ENCODE measurements at regions of chr20 and their contacts with region 1.

Region 1: DNA sequence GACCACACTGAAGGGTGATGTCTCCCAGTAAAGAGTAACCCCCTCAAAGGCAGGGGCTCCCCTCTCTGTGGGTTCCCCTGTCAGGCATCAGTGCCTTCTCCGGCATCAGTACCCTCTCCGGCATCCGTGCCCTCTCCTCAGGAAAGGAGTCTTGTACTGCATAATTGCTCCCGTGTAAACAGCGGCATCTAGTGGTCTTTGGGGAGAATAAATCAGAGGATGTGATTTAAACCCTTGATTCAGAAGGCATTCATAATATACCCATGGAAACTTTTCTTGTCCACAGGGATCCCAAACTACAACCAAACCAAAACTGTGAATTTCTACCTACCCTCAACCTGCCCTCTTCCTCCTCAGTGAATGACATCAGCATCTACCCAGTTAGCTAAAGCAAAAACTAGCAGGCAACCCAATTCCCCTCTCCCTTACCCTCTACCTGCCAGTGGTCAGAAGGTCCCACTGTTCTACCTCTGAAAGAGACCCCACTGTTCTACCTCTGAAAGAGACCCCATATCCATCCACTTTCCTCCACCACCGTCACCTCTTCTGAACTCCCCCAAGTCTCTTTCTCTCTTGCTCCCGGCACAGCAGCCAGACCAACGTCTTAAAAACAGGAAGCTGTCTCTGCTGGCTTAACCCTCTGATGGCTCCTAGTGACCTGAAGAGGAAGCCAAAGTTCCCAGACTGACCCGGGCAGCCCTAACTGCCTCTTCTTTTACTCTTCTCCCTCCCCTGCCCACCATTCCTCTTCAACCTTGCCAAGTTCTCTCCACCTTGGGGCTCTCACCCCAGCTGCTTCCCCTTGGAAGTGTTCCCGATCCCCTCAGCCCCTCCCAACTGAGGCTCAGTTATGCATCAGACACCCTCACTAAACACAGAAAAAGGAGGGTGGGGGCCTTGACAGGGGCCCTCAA is 27.2 kb downstream of the UBE2V1 start:
- DNase-seq: peak; percentile 27
- H3K4me3 ChIP-seq: no peak overlapping the region
- H3K27ac ChIP-seq: peak overlapping the region; percentile 3
- H3K27me3 ChIP-seq: no peaks in the 10 kb centered on the region
- CTCF ChIP-seq: peak; percentile 84

Region 2: GRCh38 chr20:49989234-49990065 is 96.3 kb before region 1 on chr20:
- CTCF ChIA-PET with region 1: interaction called, 10 read pairs
- POLR2A ChIA-PET with region 1: interaction called, 4 read pairs
- DNase-seq: peak; percentile 59
- H3K4me3 ChIP-seq: no peak overlapping the region
- H3K27ac ChIP-seq: peak overlapping the region; percentile 95
- H3K27me3 ChIP-seq: no peaks in the 10 kb centered on the region
- CTCF ChIP-seq: no peak

Region 3: GRCh38 chr20:50027611-50028105 is 58.1 kb before region 1 on chr20:
- CTCF ChIA-PET with region 1: interaction called, 11 read pairs
- POLR2A ChIA-PET with region 1: no interaction called
- DNase-seq: peak; percentile 53
- H3K4me3 ChIP-seq: no peak overlapping the region
- H3K27ac ChIP-seq: no peak overlapping the region
- H3K27me3 ChIP-seq: no peaks in the 10 kb centered on the region
- CTCF ChIP-seq: no peak